Activated CD4-positive, alpha-beta T cell treated with anti-CD3 and anti-CD28 coated beads, Interleukin-2, amount 10 ng/mL, durations not matched to agents 7 days and 5 days (primary cell): ENCODE measurements at regions of chr3 and their contacts with region 1.

Region 1: DNA sequence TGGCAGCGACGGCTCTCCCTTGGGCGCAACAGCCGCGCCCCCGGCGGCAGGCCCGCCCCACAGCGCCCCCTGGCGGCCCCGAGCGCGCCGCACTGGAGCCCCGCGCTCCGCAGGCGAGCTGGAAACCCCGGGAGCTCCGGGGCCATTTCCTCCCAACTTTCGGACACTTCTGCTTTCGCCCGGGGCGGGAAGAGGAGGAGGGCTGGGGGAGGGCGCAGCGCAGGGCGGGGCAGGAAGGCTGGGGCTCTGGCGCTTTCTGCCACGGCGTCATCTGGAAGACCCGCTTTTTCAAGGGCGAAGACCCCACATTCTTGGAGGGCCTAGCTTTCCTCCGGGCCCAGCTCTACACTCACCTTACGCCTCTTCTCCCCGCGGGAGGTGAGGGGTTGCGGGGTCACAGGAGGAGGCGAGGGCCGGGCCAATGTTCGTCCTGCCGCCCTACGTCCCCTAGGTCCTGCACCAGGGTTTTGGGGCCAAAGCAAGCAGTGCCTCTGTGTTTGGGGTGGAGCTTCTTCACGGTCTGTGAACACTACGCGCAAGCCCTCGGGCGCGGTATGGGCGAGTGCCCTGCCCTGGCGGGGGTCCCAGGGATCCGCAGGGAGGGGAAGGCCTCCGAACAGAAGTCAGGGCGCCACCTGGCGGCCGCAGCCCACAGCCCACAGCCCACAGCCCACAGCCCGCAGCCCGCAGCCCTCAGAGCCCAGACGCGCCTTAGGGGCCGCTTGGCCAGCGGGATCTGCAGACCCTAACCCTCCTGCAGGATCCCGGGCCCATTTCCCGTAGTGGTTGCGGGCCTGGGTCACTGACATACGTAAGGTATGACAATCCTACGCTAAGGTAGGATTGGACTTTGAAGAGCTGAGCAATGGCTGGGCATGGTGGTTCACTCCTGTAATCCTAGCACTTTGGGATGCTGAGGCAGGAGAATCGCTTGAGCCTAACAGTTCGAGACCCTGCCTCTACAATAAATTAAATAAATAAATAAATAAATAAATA is 31.1 kb downstream of the FOXL2 start:
- DNase-seq: peak; percentile 79
- H3K4me3 Mint-ChIP-seq: peak overlapping the region; percentile 74
- H3K27ac Mint-ChIP-seq: peak overlapping the region; percentile 76
- H3K4me1 Mint-ChIP-seq: peaks cover 5% of the 10 kb centered on the region
- H3K27me3 Mint-ChIP-seq: peaks cover 11% of the 10 kb centered on the region

Region 2: GRCh38 chr3:138588445-138588844 is 327.4 kb before region 1 on chr3:
- CTCF ChIA-PET with region 1: interaction called, 47 read pairs
- POLR2A ChIA-PET with region 1: no interaction called
- DNase-seq: no peak
- H3K4me3 Mint-ChIP-seq: no peak overlapping the region
- H3K27ac Mint-ChIP-seq: no peak overlapping the region
- H3K4me1 Mint-ChIP-seq: peaks cover 20% of the 10 kb centered on the region
- H3K27me3 Mint-ChIP-seq: no peaks in the 10 kb centered on the region

Region 3: GRCh38 chr3:138594150-138594934 is 321.5 kb before region 1 on chr3 and contains the start of gene CEP70:
- CTCF ChIA-PET with region 1: interaction called, 47 read pairs
- POLR2A ChIA-PET with region 1: interaction called, 6 read pairs
- DNase-seq: peak; percentile 91
- H3K4me3 Mint-ChIP-seq: peak within 1 kb of the TSS; percentile 88
- H3K27ac Mint-ChIP-seq: peak within 1 kb of the TSS; percentile 92
- H3K4me1 Mint-ChIP-seq: peaks cover 21% of the 10 kb centered on the region
- H3K27me3 Mint-ChIP-seq: no peaks in the 10 kb centered on the region
- total RNA-seq, gene CEP70: 14.5 to 15.9 TPM

Region 4: DNA sequence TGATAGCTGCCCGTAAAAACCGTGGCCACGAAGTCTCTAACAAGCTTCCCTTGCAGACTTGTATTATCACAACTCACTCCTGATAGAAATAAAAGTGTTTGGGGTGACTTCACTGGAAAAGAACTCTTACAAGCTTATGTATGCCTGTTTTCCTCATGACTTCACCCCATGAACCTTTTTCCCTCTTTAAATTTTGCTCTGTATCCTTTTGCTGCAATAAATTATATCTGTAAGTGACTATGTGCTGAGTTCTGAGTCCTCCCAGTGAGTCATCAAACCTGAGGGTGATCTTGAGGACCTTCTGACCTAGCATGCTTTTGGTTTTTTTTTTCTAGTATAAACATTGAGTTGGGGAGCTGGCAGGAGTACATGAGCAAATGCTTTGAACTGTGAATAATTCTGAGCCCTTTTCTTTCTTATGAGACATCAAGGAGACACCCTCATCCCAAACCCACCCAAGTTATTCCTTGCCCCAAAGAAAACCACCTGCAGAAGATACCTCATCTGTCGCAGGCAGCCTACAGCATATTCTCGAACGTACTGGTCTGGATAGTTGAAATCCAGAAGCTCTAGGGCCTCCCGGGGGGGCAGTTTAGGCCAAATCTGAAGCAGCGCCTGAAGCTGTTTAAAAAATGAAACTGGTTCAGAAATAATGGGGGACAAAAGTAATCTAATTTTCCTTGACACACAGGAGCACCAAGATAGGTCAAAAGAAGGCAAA is 221.4 kb before region 1 on chr3:
- CTCF ChIA-PET with region 1: interaction called, 34 read pairs
- POLR2A ChIA-PET with region 1: no interaction called
- DNase-seq: no peak
- H3K4me3 Mint-ChIP-seq: no peak overlapping the region
- H3K27ac Mint-ChIP-seq: no peak overlapping the region
- H3K4me1 Mint-ChIP-seq: no peaks in the 10 kb centered on the region
- H3K27me3 Mint-ChIP-seq: no peaks in the 10 kb centered on the region

Region 5: DNA sequence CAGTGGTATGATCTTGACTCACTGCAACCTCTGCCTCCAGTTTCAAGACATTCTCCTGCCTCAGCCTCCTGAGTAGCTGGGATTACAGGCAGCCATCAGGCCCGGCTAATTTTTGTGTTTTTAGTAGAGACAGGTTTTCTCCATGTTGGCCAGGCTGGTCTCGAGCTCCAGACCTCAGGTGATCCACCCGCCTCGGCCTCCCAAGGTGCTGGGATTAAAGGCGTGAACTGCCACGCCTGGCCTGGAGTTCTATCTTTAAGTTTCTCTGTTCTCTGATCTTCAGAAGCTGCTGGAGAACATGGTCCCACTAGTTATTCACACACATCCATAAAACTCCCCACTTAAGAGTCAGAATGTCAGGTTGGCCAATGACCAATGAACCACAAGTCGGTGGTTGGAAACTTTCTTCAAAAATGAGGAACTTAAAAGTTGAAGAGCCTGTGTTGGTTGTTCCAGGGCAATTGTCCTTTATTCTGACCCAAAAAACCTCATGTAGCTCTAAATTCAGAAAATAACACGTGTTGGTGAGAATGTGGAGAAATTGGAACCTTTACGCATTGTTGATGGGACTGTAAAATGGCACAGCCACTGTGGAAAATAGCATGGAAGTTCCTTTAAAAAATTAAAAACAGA is 25.1 kb before region 1 on chr3:
- CTCF ChIA-PET with region 1: interaction called, 12 read pairs
- POLR2A ChIA-PET with region 1: no interaction called
- DNase-seq: no peak
- H3K4me3 Mint-ChIP-seq: no peak overlapping the region
- H3K27ac Mint-ChIP-seq: no peak overlapping the region
- H3K4me1 Mint-ChIP-seq: no peaks in the 10 kb centered on the region
- H3K27me3 Mint-ChIP-seq: no peaks in the 10 kb centered on the region

Region 6: DNA sequence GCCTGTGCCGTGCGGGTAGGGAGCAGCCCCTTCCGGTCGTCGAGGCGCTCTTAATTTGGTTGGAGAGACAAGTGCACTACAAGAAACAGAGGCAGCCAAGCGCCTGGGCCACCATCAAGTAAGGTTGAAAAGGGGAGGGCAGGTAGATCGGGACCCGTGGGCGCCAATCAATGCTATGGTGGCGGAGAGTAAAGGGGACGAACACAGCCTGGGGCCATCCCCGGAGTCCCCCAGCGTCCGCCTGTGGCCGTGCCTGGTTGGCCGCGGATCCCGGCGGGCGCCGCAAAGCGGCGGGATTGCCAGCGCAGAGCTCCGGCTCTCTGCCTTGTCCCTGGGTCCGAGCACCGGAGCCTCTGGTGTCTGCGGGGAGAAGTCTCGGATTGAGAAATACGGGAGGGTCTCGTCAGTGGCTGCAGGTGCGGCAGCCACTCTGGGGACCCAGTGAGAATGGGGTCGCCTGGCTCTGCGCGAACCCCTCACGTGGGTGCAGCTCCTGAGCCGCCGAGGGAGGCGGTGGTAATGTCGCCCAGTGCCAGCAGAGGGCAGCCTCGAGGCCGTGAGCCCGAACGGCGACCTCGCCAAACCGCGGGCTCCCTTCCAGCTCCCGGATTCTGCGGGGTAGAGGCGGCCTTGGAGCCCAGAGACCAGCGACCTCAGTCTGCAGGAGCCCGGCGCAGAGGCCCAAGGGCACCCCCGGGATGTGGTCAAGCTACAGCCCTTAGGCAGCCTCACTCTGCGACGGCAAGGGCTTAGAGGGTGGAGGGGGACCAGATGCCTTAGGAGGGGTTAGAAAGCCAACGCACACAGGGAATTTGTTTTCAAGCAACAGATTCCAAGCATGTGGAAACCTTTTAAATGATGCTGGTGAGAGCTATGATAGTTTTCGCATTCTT is 20.3 kb after region 1 on chr3:
- CTCF ChIA-PET with region 1: interaction called, 11 read pairs
- POLR2A ChIA-PET with region 1: no interaction called
- DNase-seq: peak; percentile 57
- H3K4me3 Mint-ChIP-seq: peak overlapping the region; percentile 47
- H3K27ac Mint-ChIP-seq: no peak overlapping the region
- H3K4me1 Mint-ChIP-seq: peaks cover 20% of the 10 kb centered on the region
- H3K27me3 Mint-ChIP-seq: peaks cover 79% of the 10 kb centered on the region